K562 (cell line): ENCODE measurements at regions of chr11 and their contacts with region 1.

Region 1: DNA sequence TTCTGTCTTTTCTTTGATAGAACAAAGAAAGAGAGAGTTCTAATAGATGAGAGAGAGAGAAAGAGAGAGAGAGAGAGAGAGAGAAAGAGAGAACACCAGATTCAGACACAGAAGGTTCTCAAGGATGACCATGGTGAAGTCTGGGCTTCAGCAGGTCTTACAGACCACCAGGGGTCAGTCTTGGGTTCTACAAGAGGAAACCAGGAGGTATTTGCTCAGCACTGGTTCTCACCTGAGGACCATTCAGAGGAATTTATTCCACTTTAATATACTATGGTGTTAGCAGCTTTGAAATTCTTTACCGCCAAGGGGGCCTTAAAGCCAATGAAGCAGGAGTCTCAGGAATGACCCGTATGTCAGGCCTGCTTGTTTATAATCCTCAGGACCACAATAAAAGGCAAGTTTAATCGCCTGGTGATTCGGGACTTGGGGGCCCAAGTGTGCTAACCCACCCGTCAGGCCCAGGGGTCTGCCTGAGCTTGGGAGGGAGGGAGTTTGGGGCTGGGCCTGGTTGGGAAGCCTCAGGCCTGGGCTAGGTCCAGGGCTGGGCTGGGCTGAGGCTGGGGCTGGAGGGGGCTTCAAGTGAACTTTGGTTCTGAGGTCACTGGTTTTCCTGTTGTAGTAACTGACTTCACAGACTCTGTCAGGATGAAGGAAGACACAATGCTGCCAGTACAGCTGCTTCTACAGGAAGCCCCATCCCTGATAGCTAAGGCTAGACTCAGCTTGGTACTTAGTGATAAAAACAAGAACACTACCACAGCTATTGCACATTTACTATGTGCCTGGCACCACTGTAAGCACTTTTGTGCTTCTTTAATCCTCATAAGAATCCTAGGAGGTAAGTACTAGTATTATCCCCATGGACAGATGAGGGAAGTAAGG is 179.2 kb upstream of the ZBED5 start:
- DNase-seq: peak; percentile 38 to 69 (median 41)
- ATAC-seq: peak; percentile 92
- H3K4me3 ChIP-seq: no peak overlapping the region
- H3K27ac ChIP-seq: no peak overlapping the region
- H3K4me1 ChIP-seq: no peaks in the 10 kb centered on the region
- H3K27me3 ChIP-seq: peaks cover 3 to 30% of the 10 kb centered on the region in 2 experiments; a peak in 4 of 5 replicates
- CTCF ChIP-seq: peak; percentile 65 to 77 (median 72)
- EP300 ChIP-seq: no peak
- POLR2A ChIP-seq: no peak
- RAD21 ChIP-seq: peak; percentile 46 to 80; a peak in 3 of 4 replicates

Region 2: DNA sequence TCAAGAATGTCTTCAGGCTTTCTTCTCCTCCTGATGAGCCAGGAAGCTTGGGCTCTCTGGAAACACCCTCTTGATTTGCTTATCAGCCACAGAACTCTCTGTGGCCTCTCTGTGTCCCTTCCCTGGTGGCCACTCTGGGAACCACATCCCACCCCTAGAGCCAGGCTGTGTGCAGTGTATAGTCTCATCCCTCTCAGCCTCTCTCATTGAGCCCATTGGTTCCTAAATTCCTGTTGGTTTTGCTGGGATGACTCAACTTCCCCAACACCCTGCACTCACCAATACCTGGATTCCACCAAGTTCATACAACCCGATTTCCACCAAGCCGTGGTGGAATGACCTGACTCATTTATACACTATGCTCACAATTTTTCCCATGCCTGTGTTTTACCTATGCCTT is 348.7 kb before region 1 on chr11:
- CTCF ChIA-PET with region 1: no interaction called
- POLR2A ChIA-PET with region 1: no interaction called
- in situ Hi-C with region 1: no loop called
- intact Hi-C with region 1: no loop called
- DNase-seq: peak; percentile 39 to 64 (median 54)
- ATAC-seq: peak; percentile 97
- H3K4me3 ChIP-seq: no peak overlapping the region
- H3K27ac ChIP-seq: no peak overlapping the region
- H3K4me1 ChIP-seq: peaks cover 1 to 2% of the 10 kb centered on the region in 2 experiments; a peak in 2 of 5 replicates
- H3K27me3 ChIP-seq: no peaks in the 10 kb centered on the region; a peak in 1 of 5 replicates
- CTCF ChIP-seq: peak; percentile 58 to 76 (median 59)
- EP300 ChIP-seq: no peak
- POLR2A ChIP-seq: no peak
- RAD21 ChIP-seq: 0 out of 4 replicates have a peak, but pooled peaks of 1 of the 2 experiments have one; percentile 27

Region 3: GRCh38 chr11:10797531-10797930 is 239.6 kb before region 1 on chr11:
- CTCF ChIA-PET with region 1: no interaction called
- POLR2A ChIA-PET with region 1: no interaction called
- in situ Hi-C with region 1: no loop called
- intact Hi-C with region 1: no loop called
- DNase-seq: no peak
- ATAC-seq: no peak
- H3K4me3 ChIP-seq: no peak overlapping the region
- H3K27ac ChIP-seq: no peak overlapping the region
- H3K4me1 ChIP-seq: peaks cover 3 to 6% of the 10 kb centered on the region in 2 experiments; a peak in 4 of 5 replicates
- H3K27me3 ChIP-seq: no peaks in the 10 kb centered on the region
- CTCF ChIP-seq: no peak
- EP300 ChIP-seq: no peak
- POLR2A ChIP-seq: no peak
- RAD21 ChIP-seq: no peak

Region 4: GRCh38 chr11:11157185-11157584 is 120.1 kb after region 1 on chr11:
- CTCF ChIA-PET with region 1: no interaction called
- POLR2A ChIA-PET with region 1: no interaction called
- in situ Hi-C with region 1: no loop called
- intact Hi-C with region 1: loop called (anchors 5 kb)
- DNase-seq: peak; percentile 21 to 41 (median 34)
- ATAC-seq: peak; percentile 84
- H3K4me3 ChIP-seq: no peak overlapping the region
- H3K27ac ChIP-seq: no peak overlapping the region
- H3K4me1 ChIP-seq: peaks cover 0 to 5% of the 10 kb centered on the region in 2 experiments; a peak in 1 of 5 replicates
- H3K27me3 ChIP-seq: peaks cover 0 to 10% of the 10 kb centered on the region in 2 experiments; a peak in 2 of 5 replicates
- CTCF ChIP-seq: peak; percentile 40 to 46 (median 42); a peak in 4 of 6 replicates
- EP300 ChIP-seq: no peak
- POLR2A ChIP-seq: no peak
- RAD21 ChIP-seq: peak in 1 of 2 experiments; percentile 27; a peak in 1 of 4 replicates